Dendritic cell treated with granulocyte-macrophage colony-stimulating factor and Interleukin-4, amounts not matched to agents 40 ng/mL and 50 ng/mL, for 4 days (primary cell): ENCODE measurements at regions of chr18 and their contacts with region 1.

Region 1: GRCh38 chr18:63237881-63238667 is 81.5 kb downstream of the BCL2 start:
- H3K4me3 Mint-ChIP-seq: no peak overlapping the region
- H3K27ac Mint-ChIP-seq: peak overlapping the region; percentile 100
- H3K4me1 Mint-ChIP-seq: peaks cover 34% of the 10 kb centered on the region
- H3K27me3 Mint-ChIP-seq: no peaks in the 10 kb centered on the region

Region 2: GRCh38 chr18:62399276-62399675 is 838.8 kb before region 1 on chr18:
- intact Hi-C with region 1: no loop called
- H3K4me3 Mint-ChIP-seq: no peak overlapping the region
- H3K27ac Mint-ChIP-seq: peak overlapping the region; percentile 49
- H3K4me1 Mint-ChIP-seq: peaks cover 21% of the 10 kb centered on the region
- H3K27me3 Mint-ChIP-seq: peaks cover 29% of the 10 kb centered on the region

Region 3: GRCh38 chr18:63299837-63300745 is 62.0 kb after region 1 on chr18:
- intact Hi-C with region 1: no loop called
- H3K4me3 Mint-ChIP-seq: no peak overlapping the region
- H3K27ac Mint-ChIP-seq: peak overlapping the region; percentile 37
- H3K4me1 Mint-ChIP-seq: peaks cover 53% of the 10 kb centered on the region
- H3K27me3 Mint-ChIP-seq: no peaks in the 10 kb centered on the region

Region 4: DNA sequence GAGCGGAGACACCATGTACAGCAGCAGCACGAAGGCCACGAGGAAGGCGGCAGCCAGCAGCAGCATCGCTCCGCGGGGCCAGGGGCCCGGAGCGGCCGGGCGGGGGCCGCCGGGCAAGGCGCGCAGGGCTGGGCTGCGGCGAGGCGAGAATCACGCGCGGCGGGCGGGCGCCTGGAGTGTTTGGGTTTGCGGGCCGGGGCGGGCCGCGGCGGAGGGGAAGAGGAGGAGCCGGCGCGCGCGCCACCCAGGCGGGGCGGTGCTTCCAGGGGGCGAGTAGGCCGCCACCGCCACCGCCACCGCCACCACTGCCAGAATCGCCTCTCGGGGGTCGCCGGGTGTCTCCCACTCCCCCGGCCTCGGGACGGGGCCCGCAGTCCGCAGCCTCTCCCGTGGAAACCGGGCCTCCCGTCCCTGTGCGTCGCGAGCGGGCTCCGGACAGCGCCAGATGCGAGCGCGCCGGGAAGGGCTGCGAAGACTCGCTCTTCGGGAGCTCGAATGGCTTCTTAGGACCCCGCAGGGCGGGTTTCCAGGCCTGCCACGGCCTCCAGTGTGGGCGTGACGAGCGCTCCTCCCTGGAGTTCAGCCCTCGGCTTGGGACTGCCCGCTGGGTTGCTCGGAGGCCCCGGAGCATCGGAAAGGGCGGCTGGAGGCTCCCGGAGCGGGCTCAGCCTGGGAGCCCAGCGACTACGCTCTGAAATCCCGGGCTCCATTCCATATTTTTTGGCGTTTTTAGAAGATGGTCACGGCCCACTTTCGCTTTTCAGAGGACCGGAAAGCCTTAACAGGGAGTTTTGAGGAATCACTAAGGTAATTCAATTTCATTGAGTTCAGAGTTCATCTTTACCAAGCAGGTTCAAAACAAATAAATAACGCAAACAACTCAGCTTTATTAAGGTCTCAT is 129.2 kb after region 1 on chr18 and contains the start of gene KDSR:
- intact Hi-C with region 1: loop called (anchors 2 kb)
- H3K4me3 Mint-ChIP-seq: peak within 1 kb of the TSS; percentile 84
- H3K27ac Mint-ChIP-seq: peak within 1 kb of the TSS; percentile 82
- H3K4me1 Mint-ChIP-seq: peaks cover 26% of the 10 kb centered on the region
- H3K27me3 Mint-ChIP-seq: peaks cover 2% of the 10 kb centered on the region